ENCODE measurements at regions of chr1 and their contacts with region 1.

Region 1: GRCh38 chr1:150281837-150282653 is at the start of gene CIART:
- DNase-seq: peak; percentile 92 to 96
- ATAC-seq: peak; percentile 93 to 96 (median 95)
- H3K4me3 ChIP-seq: peak within 1 kb of the TSS; percentile 80
- H3K27ac ChIP-seq: peak within 1 kb of the TSS; percentile 94
- H3K4me1 ChIP-seq: peaks cover 15% of the 10 kb centered on the region
- H3K27me3 ChIP-seq: no peaks in the 10 kb centered on the region
- CTCF ChIP-seq: no peak
- total RNA-seq, gene CIART: 6.2 to 23.4 (median 14.5) TPM

Region 2: DNA sequence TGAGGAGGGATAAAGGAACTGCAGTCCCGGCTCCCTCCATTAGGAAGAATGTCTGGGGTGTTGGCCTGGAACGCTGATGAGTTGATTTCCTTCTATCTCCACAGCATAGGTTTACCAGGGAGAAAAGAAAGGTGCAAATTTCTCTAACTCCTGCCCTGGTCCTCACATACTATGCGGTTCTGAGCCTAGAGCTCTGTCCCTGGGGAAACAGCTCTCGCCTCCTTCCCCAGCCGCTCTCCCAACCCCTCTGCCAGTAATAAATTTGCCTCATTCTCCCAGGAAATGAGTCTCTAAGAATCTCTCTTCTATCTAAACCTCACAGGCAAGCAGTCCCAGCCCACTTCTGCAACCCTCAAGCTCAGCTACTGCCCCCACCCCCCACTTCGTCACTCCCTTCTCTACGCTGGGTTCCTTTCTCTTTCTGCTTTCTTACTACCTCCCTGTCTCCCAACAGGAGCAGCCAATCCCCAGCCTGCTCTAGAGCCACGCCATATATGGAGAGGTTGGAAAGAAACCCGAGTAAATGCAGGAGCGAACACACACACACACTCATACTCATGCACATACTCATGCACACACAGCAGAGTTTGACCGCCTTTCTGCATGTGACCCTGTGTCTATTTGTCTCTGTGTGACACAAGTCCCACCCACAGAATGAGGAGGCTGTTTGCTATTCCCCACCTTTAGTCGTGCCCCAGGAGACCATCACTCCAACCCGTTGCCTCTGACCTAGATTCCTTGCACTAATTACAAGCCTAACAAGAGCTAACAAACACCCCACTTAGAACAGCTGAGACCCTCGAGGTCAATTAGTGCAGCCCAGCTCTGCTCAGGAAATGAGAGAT is 119.0 kb before region 1 on chr1:
- intact Hi-C with region 1: no loop called
- DNase-seq: peak; percentile 75 to 86
- ATAC-seq: peak; percentile 90 to 93 (median 92)
- H3K4me3 ChIP-seq: peak overlapping the region; percentile 61
- H3K27ac ChIP-seq: peak overlapping the region; percentile 89
- H3K4me1 ChIP-seq: peaks cover 21% of the 10 kb centered on the region
- H3K27me3 ChIP-seq: no peaks in the 10 kb centered on the region
- CTCF ChIP-seq: no peak

Region 3: DNA sequence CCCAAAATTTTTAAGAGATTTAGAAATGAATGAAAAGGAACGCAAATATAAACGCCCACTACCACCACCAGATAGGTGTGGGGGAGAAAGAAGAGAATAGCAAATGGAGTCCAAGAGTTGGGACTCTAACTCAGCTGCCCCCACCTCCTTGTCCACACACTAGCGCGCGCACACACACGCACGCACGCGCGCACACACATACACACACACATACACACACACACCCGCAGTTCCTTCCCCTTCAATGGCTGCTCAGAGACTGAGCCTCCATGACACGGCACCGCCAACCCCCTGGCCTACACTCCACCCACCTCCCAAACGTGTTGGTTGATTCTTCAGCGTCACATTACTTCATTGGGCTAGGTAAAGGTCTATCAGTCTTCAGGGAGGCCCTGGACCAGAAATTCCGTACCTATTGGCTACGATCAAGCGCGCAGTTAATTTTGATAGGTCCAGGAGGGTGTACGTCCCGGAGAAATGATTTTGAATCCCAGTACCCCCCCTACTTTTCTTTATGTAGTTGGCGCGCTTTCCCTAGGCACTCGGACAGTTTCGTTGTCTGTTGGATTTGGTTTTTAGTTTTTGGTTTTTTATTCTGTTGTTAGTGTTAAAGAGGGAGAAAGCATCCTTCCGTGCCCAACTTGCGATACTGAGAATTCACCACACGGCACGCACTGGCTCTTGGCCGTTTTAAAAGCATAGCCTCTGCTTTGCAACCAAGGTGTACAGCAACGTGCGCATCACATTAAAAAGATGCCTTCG is 46.0 kb before region 1 on chr1 and contains the start of gene ANP32E:
- intact Hi-C with region 1: loop called in 1 of 2 experiments (anchors 5 kb)
- DNase-seq: peak; percentile 93 to 97
- ATAC-seq: peak; percentile 94 to 97 (median 96)
- H3K4me3 ChIP-seq: peak within 1 kb of the TSS; percentile 83
- H3K27ac ChIP-seq: peak within 1 kb of the TSS; percentile 98
- H3K4me1 ChIP-seq: peaks cover 3% of the 10 kb centered on the region
- H3K27me3 ChIP-seq: no peaks in the 10 kb centered on the region
- CTCF ChIP-seq: peak; percentile 28
- total RNA-seq, gene ANP32E: 26.9 to 37.4 (median 31.9) TPM

Region 4: GRCh38 chr1:150259758-150260669 is 22.0 kb before region 1 on chr1:
- intact Hi-C with region 1: loop called (anchors 1 kb)
- DNase-seq: no peak
- ATAC-seq: peak; percentile 15 to 38 (median 28)
- H3K4me3 ChIP-seq: no peak overlapping the region
- H3K27ac ChIP-seq: no peak overlapping the region
- H3K4me1 ChIP-seq: peaks cover 20% of the 10 kb centered on the region
- H3K27me3 ChIP-seq: no peaks in the 10 kb centered on the region
- CTCF ChIP-seq: no peak